ENCODE measurements at regions of chr19 and their contacts with region 1.

Region 1: GRCh38 chr19:47863514-47863936 is 4.5 kb downstream of the TPRX2 start:
- DNase-seq: peak; percentile 93
- H3K4me3 ChIP-seq: no peak overlapping the region
- H3K27ac ChIP-seq: no peak overlapping the region
- H3K4me1 ChIP-seq: no peaks in the 10 kb centered on the region
- H3K27me3 ChIP-seq: peaks cover 28% of the 10 kb centered on the region; the same call in 1 of the 2 replicates
- CTCF ChIP-seq: peak; percentile 97
- EP300 ChIP-seq: no peak
- RAD21 ChIP-seq: peak; percentile 87

Region 2: DNA sequence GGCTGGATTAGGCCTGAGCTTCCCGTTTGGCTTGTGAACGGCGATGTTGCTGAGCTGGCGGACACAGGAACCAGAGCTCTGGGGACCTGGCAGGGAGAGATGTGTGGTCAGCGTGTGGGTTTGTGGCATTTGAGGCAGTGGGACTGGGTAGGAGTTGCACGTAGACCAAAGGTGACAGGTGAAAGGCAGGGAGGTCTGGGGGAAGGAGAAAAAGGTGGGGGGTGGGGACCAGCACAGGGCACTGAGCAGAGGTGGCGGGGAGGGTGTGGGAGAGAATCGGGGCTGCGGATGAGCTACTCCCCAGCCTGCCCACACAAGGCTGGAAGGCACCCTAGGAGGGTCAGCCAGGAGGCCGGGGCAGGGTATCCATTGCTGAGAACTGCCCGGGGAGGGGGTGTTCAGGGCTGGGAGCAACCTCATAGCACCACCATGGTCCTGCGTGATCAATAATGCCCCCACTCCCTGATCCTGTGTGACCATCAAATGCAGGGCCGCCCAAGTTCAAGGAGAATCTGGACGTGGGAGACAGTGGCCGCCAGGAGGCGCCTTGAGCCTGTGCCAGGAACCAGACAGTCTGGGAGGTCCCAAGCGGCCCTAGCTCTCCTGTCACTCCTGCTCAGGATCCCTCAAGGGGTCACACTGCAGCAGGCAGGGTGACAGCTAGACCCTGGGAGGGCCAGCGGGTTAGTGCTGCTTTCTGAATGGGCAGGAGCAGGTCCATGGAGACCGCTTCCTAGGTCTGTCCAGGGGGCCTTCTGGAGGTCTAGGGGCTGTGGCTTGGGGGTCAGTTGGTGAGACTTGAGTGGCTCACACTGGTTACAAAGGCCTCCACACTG is 97.8 kb before region 1 on chr19:
- CTCF ChIA-PET with region 1: interaction called, 89 read pairs
- POLR2A ChIA-PET with region 1: no interaction called
- DNase-seq: peak; percentile 77
- H3K4me3 ChIP-seq: no peak overlapping the region; a peak in 1 of 4 replicates
- H3K27ac ChIP-seq: no peak overlapping the region
- H3K4me1 ChIP-seq: no peaks in the 10 kb centered on the region; a peak in 1 of 4 replicates
- H3K27me3 ChIP-seq: no peaks in the 10 kb centered on the region
- CTCF ChIP-seq: peak; percentile 79
- EP300 ChIP-seq: no peak
- RAD21 ChIP-seq: peak; percentile 75

Region 3: DNA sequence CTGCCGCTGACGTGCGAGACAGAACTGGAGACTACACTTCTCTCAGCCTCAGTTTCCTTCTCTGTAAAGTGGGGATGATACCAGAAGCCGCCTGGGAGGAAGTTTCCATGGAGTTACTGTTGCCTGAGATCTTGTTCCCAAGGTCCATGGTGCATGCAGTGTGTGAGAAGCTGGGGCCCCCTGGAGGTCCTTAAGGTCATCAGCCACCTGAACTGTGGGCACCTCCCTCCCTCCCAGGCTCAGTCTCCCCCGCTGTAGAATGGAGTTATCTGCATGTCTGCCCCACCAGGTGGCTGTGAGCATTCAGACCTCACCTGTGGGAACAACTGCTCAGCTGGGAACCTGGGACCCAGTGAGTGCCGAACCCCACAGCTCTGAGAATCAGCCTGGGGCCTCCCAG is 39.1 kb before region 1 on chr19:
- CTCF ChIA-PET with region 1: interaction called, 14 read pairs
- POLR2A ChIA-PET with region 1: no interaction called
- DNase-seq: no peak
- H3K4me3 ChIP-seq: no peak overlapping the region
- H3K27ac ChIP-seq: no peak overlapping the region
- H3K4me1 ChIP-seq: no peaks in the 10 kb centered on the region
- H3K27me3 ChIP-seq: peaks cover 23% of the 10 kb centered on the region; the same call in 1 of the 2 replicates
- CTCF ChIP-seq: no peak
- EP300 ChIP-seq: no peak
- RAD21 ChIP-seq: no peak

Region 4: GRCh38 chr19:47848823-47849473 is 14.6 kb before region 1 on chr19:
- CTCF ChIA-PET with region 1: interaction called, 12 read pairs
- POLR2A ChIA-PET with region 1: interaction called, 4 read pairs
- DNase-seq: peak; percentile 33
- H3K4me3 ChIP-seq: peak overlapping the region in 1 of 2 experiments; percentile 52; a peak in 1 of 4 replicates
- H3K27ac ChIP-seq: no peak overlapping the region
- H3K4me1 ChIP-seq: no peaks in the 10 kb centered on the region
- H3K27me3 ChIP-seq: peaks cover 73% of the 10 kb centered on the region
- CTCF ChIP-seq: peak; percentile 64
- EP300 ChIP-seq: no peak
- RAD21 ChIP-seq: no peak

Region 5: GRCh38 chr19:48290771-48291488 is 427.4 kb after region 1 on chr19:
- CTCF ChIA-PET with region 1: no interaction called
- POLR2A ChIA-PET with region 1: no interaction called
- DNase-seq: peak; percentile 86
- H3K4me3 ChIP-seq: peak overlapping the region; percentile 48 to 61
- H3K27ac ChIP-seq: peak overlapping the region in 1 of 2 experiments; percentile 39; a peak in 1 of 4 replicates
- H3K4me1 ChIP-seq: peaks cover 4% of the 10 kb centered on the region in 2 experiments; a peak in 1 of 4 replicates
- H3K27me3 ChIP-seq: no peaks in the 10 kb centered on the region
- CTCF ChIP-seq: peak; percentile 97
- EP300 ChIP-seq: no peak
- RAD21 ChIP-seq: peak; percentile 80